ENCODE measurements at regions of chr5 and their contacts with region 1.

Region 1: GRCh38 chr5:149990518-149991376 is 9.7 kb downstream of the TIGD6 start:
- DNase-seq: peak in 1 of 2 experiments; percentile 65
- H3K4me3 ChIP-seq: no peak overlapping the region
- H3K27ac ChIP-seq: no peak overlapping the region
- H3K4me1 ChIP-seq: no peaks in the 10 kb centered on the region
- H3K27me3 ChIP-seq: no peaks in the 10 kb centered on the region
- CTCF ChIP-seq: peak; percentile 53 to 92 (median 89)
- EP300 ChIP-seq: no peak
- POLR2A ChIP-seq: no peak
- RAD21 ChIP-seq: peak; percentile 98

Region 2: GRCh38 chr5:149636851-149637246 is 353.9 kb before region 1 on chr5:
- CTCF ChIA-PET with region 1: interaction called, 25 read pairs
- POLR2A ChIA-PET with region 1: no interaction called
- DNase-seq: peak; percentile 49 to 83
- H3K4me3 ChIP-seq: no peak overlapping the region
- H3K27ac ChIP-seq: no peak overlapping the region
- H3K4me1 ChIP-seq: peaks cover 12 to 16% (median 12%) of the 10 kb centered on the region in 4 experiments
- H3K27me3 ChIP-seq: no peaks in the 10 kb centered on the region; a peak in 1 of 7 replicates
- CTCF ChIP-seq: peak; percentile 85 to 93 (median 91)
- EP300 ChIP-seq: no peak
- POLR2A ChIP-seq: no peak
- RAD21 ChIP-seq: peak; percentile 97 to 98

Region 3: GRCh38 chr5:149895416-149896345 is 95.1 kb before region 1 on chr5:
- CTCF ChIA-PET with region 1: interaction called, 10 read pairs
- POLR2A ChIA-PET with region 1: no interaction called
- DNase-seq: no peak
- H3K4me3 ChIP-seq: no peak overlapping the region
- H3K27ac ChIP-seq: no peak overlapping the region
- H3K4me1 ChIP-seq: no peaks in the 10 kb centered on the region
- H3K27me3 ChIP-seq: peaks cover 0 to 2% (median 0%) of the 10 kb centered on the region in 4 experiments; a peak in 1 of 7 replicates
- CTCF ChIP-seq: no peak
- EP300 ChIP-seq: no peak
- POLR2A ChIP-seq: no peak
- RAD21 ChIP-seq: no peak

Region 4: GRCh38 chr5:149932445-149933350 is 58.0 kb before region 1 on chr5:
- CTCF ChIA-PET with region 1: interaction called, 11 read pairs
- POLR2A ChIA-PET with region 1: no interaction called
- DNase-seq: peak in 1 of 2 experiments; percentile 72
- H3K4me3 ChIP-seq: no peak overlapping the region
- H3K27ac ChIP-seq: no peak overlapping the region
- H3K4me1 ChIP-seq: peaks cover 0 to 3% (median 0%) of the 10 kb centered on the region in 4 experiments; a peak in 1 of 7 replicates
- H3K27me3 ChIP-seq: no peaks in the 10 kb centered on the region; a peak in 2 of 7 replicates
- CTCF ChIP-seq: peak; percentile 60 to 75 (median 67)
- EP300 ChIP-seq: no peak
- POLR2A ChIP-seq: no peak
- RAD21 ChIP-seq: peak; percentile 22 to 49

Region 5: DNA sequence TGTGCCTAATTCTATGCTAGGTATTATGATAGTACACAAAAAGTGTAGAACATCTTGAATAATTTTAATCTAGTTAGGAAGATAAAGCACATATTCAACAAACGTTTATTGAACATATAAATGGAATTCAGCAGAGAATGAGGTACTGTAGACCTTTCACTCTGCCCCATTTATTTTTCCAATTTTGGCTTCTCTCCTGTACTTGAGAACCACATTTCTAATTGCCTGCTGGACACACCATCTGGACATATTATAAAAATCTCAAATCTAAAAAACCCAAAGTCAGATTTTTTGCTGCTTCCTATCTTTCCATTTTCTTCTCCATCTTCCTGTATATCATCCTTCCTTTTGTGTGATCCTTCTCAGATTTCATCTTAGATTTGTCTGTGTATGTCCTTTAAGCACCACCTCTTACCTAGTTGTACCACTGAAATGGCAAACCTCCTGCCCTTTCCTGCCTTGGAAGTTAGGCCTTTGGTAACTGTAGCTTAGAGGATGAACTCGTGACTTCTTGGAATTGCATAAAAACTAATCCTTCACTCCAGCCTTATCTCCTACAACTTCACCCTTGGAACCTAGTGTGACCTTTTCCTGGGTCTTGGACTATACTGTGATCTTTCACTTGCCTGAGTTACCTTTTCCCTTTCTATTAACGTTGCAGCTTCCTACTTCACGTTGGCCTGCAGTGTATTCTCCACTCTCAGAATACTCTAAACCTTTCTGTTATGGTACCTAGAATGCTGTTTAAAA is 21.4 kb before region 1 on chr5:
- CTCF ChIA-PET with region 1: interaction called, 41 read pairs
- POLR2A ChIA-PET with region 1: no interaction called
- DNase-seq: no peak
- H3K4me3 ChIP-seq: no peak overlapping the region
- H3K27ac ChIP-seq: no peak overlapping the region
- H3K4me1 ChIP-seq: no peaks in the 10 kb centered on the region
- H3K27me3 ChIP-seq: no peaks in the 10 kb centered on the region
- CTCF ChIP-seq: no peak
- EP300 ChIP-seq: no peak
- POLR2A ChIP-seq: no peak
- RAD21 ChIP-seq: no peak

Region 6: DNA sequence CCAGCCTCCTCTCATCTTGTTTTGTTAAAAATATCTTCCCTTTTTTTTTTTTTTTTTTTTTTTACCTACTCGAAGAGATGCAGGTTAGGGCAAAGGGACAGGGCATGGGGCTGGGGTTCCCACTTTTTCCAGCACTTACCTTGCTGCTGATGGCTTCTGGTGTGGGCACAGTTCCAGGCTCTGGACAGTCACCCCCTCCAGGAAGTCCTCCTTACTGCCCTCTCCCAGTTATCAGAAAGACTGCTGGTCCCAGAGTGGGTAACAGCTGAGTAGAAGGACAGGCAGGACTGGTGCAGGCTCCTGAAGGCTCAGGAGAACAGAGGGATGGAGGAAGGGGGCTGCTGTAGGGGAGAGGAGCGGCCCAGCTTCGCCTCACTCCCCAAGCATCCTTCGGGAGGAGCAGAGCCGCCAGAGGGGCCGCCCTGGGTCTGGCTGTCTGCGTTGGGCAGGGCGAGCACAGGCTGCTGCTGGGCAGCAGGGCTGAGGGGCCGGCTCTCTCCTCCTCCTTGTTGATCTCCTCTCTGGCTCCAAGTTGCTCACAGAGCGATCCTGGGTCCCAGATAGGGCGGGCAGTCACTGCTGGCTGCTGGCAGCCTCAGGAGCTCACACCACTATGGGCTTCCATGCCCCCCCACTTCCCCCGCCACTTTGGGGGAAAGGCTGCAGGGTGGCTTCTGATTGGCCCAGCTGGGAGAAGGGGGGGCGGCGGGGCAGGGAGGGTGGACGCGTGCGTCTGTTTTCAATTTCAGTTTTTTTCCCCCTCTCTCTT is 164.7 kb after region 1 on chr5 and contains the start of gene PDGFRB:
- CTCF ChIA-PET with region 1: no interaction called
- POLR2A ChIA-PET with region 1: no interaction called
- DNase-seq: peak in 1 of 2 experiments; percentile 79
- H3K4me3 ChIP-seq: peak within 1 kb of the TSS; percentile 7 to 50 (median 24); a peak in 6 of 8 replicates
- H3K27ac ChIP-seq: no peak within 1 kb of the TSS
- H3K4me1 ChIP-seq: peaks cover 6 to 27% (median 13%) of the 10 kb centered on the region in 4 experiments
- H3K27me3 ChIP-seq: no peaks in the 10 kb centered on the region; a peak in 2 of 7 replicates
- CTCF ChIP-seq: no peak
- EP300 ChIP-seq: no peak
- POLR2A ChIP-seq: 0 out of 3 replicates have a peak, but pooled peaks of 1 of the 2 experiments have one; percentile 18
- RAD21 ChIP-seq: peak in 1 of 2 experiments; percentile 12; a peak in 1 of 4 replicates
- total RNA-seq, gene PDGFRB: 13.7 and 15.9 TPM in 2 replicates

Measured in H1 (cell line).